ENCODE measurements at regions of chr17 and their contacts with region 1.

Region 1: GRCh38 chr17:82030470-82031302 is 792 bp upstream of the RAC3 start:
- DNase-seq: no peak
- H3K4me3 ChIP-seq: peak overlapping the region; percentile 47
- H3K27me3 ChIP-seq: no peaks in the 10 kb centered on the region
- CTCF ChIP-seq: peak; percentile 91

Region 2: GRCh38 chr17:82051776-82052637 is 21.3 kb after region 1 on chr17 and contains the starts of genes GPS1 and RFNG:
- CTCF ChIA-PET with region 1: interaction called, 23 read pairs
- POLR2A ChIA-PET with region 1: no interaction called
- DNase-seq: no peak
- H3K4me3 ChIP-seq: peak within 1 kb of the TSS; percentile 87
- H3K27me3 ChIP-seq: no peaks in the 10 kb centered on the region
- CTCF ChIP-seq: no peak
- polyA plus RNA-seq, gene GPS1: 79.7 and 131 TPM in 2 replicates
- polyA plus RNA-seq, gene RFNG: 15.8 and 23.7 TPM in 2 replicates

Region 3: DNA sequence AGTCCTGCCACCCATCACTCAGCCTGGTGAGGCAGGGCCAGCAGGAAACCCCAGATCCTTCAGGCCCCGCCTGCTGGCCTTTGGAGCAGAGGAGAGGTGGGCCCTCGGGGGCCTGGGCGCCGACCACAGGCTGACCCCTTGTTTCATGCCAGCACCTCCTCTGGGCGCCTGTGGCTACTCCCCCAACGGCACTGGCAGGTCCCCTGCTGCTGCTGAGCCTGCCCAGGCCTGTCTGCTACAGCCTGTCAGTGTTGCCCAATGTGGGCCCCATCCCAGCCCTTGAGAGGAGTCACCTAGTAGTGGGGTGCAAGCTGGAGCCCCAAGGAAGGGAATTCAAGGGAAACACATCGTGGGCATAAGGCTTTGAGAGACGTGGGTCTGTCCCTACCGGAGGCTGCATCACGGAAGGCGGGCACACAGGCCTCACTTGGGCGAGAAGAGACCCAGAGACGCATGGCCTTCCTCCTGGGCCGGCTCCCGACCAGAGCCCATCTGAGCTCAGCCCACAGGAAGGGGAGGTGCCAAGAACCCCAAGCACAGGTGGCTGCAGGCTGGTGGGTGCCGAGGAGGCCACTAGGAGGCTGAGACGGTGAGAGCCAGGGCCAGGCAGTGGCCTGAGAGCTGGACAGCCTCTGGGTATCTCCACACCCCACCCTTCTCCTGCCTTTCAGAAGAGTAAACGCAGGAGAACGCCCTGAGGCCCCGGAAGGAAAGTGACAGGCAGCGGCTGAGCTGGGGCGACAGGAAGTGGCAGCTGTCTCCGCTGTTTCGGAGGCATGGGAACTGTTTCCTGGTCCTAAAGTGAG is 75.4 kb after region 1 on chr17:
- CTCF ChIA-PET with region 1: interaction called, 10 read pairs
- POLR2A ChIA-PET with region 1: no interaction called
- DNase-seq: no peak
- H3K4me3 ChIP-seq: no peak overlapping the region
- H3K27me3 ChIP-seq: no peaks in the 10 kb centered on the region
- CTCF ChIP-seq: peak; percentile 55

Region 4: DNA sequence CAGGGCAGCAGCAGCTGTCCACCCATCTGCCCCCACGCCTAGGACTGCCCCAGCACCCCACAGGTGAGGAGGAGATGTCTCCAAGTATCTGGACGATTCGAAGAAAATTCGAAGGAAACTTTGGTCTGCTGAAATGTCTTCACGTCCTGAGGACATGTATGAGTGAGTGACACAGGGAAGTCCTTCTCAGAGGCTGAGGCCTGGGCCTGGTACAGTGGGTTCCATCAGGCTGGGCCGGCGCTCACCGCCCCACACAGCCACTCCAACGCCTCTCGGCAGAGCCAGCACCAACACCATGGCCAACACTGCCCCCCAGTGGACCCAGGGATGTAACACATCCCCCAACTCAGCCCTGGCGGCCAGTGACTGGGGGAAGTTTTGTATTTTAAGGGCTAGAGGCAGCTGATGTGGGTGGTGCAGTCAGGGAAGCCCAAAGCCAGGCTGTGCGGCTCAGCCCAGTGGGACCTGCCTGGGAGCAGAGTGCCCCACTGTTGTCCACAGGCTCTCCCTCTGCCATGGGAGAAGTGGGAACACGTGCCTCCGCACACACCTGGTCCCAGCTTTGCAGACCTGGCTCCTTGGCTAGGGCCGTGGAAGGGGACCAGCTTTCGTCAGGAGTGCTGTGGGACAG is 123.2 kb after region 1 on chr17:
- CTCF ChIA-PET with region 1: interaction called, 101 read pairs
- POLR2A ChIA-PET with region 1: interaction called, 3 read pairs
- DNase-seq: no peak
- H3K4me3 ChIP-seq: no peak overlapping the region
- H3K27me3 ChIP-seq: no peaks in the 10 kb centered on the region
- CTCF ChIP-seq: peak; percentile 93

Region 5: DNA sequence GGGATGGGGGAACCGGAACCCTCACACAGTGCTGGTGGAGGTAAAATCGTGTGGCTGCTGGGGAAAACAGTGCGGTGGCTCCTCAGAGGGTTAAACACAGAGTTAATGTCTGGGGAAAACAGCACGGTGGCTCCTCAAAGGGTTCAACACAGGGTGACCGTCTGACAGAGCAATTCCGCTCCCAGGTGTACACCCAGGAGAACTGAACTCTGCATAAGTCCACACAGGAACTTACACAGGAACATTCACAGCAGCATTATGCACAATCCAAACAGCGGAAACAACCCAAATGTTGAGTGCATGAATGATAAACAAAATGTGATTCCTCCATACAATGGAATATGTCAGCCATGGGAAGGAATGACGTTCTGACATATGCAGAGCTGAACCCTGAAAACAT is 130.5 kb after region 1 on chr17:
- CTCF ChIA-PET with region 1: interaction called, 101 read pairs
- POLR2A ChIA-PET with region 1: interaction called, 4 read pairs
- DNase-seq: no peak
- H3K4me3 ChIP-seq: no peak overlapping the region
- H3K27me3 ChIP-seq: no peaks in the 10 kb centered on the region
- CTCF ChIP-seq: no peak